CD4-positive, alpha-beta T cell (primary cell): ENCODE measurements at regions of chr2 and their contacts with region 1.

Region 1: DNA sequence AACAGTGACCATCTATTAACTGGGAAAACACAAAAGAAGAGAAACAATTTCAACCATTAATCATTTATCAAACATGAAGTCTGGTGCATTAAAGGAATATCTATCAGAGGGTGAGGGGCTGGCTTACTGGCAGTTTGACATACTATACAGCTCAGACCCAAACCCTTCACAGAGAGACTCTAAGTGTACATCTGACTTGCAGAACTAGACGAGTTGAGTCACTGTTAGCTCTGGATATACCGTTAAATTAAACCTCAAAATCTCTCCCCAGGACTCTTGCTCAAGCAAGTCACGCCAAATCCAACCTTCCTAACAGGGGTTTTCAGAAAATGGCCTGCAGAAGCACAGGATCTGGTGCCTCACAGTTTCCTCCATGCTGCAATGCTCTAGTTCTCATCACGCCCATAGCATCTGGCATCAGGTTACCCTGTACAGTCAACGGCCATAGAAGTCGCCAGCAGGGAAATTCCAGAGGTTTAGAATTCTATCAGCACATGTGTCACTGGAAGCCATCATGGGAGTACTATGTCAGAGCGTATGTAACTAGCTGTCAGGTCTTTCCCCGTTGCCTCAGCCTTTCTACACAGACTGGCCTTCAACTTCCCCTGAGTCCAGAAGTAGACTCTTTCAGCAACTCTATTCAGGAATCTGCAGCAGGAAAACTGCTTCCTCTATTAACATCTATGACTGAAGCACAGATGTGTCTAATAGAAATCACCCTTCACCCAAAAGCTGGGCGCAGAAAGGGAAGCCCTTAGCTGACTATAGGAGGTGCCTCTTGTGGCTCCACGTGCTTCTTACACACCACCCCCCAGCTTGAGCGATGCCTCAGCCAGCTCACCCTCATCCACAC is 9.3 kb downstream of the TGOLN2 start:
- DNase-seq: peak in 2 of 14 experiments; percentile 57 to 74
- ATAC-seq: peak; percentile 55
- H3K4me3 ChIP-seq: no peak overlapping the region
- H3K4me3 Mint-ChIP-seq: peak overlapping the region; percentile 62
- H3K27ac ChIP-seq: peak overlapping the region in 1 of 2 donors; percentile 52
- H3K27ac Mint-ChIP-seq: peak overlapping the region; percentile 77
- H3K4me1 ChIP-seq: peaks cover 54% of the 10 kb centered on the region
- H3K4me1 Mint-ChIP-seq: peaks cover 68% of the 10 kb centered on the region
- H3K27me3 ChIP-seq: no peaks in the 10 kb centered on the region
- H3K27me3 Mint-ChIP-seq: no peaks in the 10 kb centered on the region
- CTCF ChIP-seq: no peak

Region 2: DNA sequence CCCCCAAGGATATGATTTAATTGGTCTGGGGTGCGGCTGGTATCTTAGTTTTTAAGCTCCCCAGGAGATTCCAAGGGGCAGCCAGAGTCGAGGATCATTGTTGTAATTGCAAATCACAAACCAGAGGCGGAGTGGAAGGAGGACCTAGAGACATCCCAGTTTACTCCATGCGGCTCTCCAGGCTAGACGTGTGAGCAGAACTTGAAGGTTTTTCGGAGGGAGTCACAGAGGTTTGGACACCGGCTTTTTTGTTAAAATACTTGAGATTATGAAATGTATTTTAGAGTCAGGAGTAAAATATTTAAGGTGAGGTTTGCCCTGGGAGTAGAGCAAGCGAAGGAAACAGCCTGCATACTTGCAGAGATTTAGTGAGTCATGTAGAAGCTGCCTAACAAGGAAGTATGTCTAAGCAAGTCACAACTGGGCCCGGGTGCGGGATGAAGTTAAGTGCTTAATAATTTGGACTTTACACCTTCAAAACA is 30.2 kb before region 1 on chr2:
- CTCF ChIA-PET with region 1: no interaction called
- POLR2A ChIA-PET with region 1: no interaction called
- intact Hi-C with region 1: no loop called
- DNase-seq: no peak
- ATAC-seq: no peak
- H3K4me3 ChIP-seq: no peak overlapping the region
- H3K4me3 Mint-ChIP-seq: no peak overlapping the region
- H3K27ac ChIP-seq: no peak overlapping the region
- H3K27ac Mint-ChIP-seq: no peak overlapping the region
- H3K4me1 ChIP-seq: peaks cover 24% of the 10 kb centered on the region
- H3K4me1 Mint-ChIP-seq: peaks cover 30% of the 10 kb centered on the region
- H3K27me3 ChIP-seq: no peaks in the 10 kb centered on the region
- H3K27me3 Mint-ChIP-seq: no peaks in the 10 kb centered on the region
- CTCF ChIP-seq: no peak

Region 3: DNA sequence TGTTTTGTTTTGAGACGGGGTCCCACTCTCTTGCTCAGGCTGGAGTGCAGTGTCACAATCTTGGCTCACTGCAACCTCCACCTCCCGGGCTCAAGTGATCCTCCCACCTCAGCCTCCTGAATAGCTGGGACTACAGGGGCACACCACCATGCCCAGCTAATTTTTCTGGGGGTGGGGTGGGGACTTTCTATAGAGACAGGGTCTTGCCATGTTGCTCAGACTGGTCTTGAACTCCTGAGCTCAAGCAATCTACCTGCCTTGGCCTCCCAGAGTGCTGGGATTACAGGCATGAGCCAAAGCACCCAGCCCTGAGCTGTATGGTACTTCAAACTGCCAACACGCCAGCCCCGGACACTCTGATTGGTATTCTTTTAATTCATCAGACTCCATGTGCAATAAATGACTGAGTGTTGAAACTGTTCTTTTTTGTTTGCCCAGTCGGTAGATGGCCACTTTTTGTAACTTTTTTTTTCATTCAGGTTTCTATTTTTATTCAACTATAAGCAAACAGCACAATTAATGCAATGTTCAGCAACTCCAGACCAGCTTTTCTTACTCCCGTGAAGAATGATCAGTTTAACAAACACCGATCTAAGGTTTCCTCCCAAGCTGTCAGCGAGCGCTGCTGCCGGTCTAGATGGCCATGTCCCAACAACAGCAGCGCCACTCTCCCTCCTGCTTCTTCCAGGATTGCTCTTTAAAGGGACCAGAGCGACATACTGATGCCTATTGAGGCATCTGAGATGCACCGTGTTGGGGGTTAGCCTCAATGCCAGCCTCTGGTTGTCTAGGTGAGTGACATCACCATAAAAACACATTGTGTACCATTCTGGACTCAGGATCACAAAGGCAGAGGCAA is 21.8 kb after region 1 on chr2:
- CTCF ChIA-PET with region 1: no interaction called
- POLR2A ChIA-PET with region 1: interaction called, 3 read pairs
- intact Hi-C with region 1: loop called in 1 of 2 experiments (anchors 1 kb)
- DNase-seq: no peak
- ATAC-seq: no peak
- H3K4me3 ChIP-seq: no peak overlapping the region
- H3K4me3 Mint-ChIP-seq: no peak overlapping the region
- H3K27ac ChIP-seq: no peak overlapping the region
- H3K27ac Mint-ChIP-seq: no peak overlapping the region
- H3K4me1 ChIP-seq: no peaks in the 10 kb centered on the region
- H3K4me1 Mint-ChIP-seq: no peaks in the 10 kb centered on the region
- H3K27me3 ChIP-seq: no peaks in the 10 kb centered on the region
- H3K27me3 Mint-ChIP-seq: no peaks in the 10 kb centered on the region
- CTCF ChIP-seq: no peak